ENCODE measurements at regions of chr18 and their contacts with region 1.

Region 1: GRCh38 chr18:55343396-55344073 is 244.5 kb downstream of the TCF4 start:
- DNase-seq: no peak
- ATAC-seq: peak; percentile 61 to 64
- H3K4me3 ChIP-seq: no peak overlapping the region
- H3K27ac ChIP-seq: no peak overlapping the region
- H3K4me1 ChIP-seq: peaks cover 4% of the 10 kb centered on the region
- H3K27me3 ChIP-seq: no peaks in the 10 kb centered on the region

Region 2: DNA sequence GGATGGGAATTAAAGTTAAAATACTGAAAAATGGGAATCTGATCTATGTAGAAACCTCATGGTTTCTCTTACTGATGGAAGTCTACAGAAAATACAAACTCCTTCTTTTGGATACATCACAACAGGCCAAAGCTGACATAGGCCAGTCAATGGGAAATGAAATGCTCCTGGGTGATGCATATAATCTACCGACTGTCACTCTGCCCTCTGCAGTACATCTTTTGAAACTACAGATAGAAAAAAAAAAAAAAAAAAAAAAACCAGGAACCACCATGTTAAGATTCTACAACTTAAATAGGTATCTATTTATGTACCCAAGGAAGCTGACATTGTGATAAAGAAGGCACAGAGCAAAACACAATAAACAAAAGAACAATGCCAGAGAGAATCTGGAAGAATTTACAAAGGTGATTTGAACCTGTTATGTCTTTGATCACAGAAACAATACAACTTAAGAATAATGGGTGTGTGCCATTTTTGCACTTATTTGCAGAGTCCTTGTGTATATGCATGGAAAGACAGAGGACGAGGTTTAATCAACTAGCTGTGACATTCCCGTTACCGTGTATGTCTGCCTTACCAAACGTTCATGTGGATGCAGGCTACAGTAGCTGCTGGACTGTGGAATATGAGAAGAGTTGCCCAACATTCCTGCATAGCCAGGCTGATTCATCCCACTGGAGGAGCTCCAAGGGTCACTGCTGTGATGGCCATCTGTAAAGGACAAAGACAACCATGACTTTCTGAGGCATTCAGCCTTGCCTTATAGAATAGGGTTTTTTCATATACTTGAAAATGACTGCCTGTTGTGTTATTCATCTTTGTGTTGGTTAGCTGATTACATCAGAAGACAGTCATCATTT is 68.3 kb before region 1 on chr18:
- intact Hi-C with region 1: no loop called
- DNase-seq: peak in 2 of 3 donors; percentile 42 to 48
- ATAC-seq: peak; percentile 33 to 62
- H3K4me3 ChIP-seq: no peak overlapping the region
- H3K27ac ChIP-seq: no peak overlapping the region
- H3K4me1 ChIP-seq: no peaks in the 10 kb centered on the region
- H3K27me3 ChIP-seq: no peaks in the 10 kb centered on the region

Region 3: DNA sequence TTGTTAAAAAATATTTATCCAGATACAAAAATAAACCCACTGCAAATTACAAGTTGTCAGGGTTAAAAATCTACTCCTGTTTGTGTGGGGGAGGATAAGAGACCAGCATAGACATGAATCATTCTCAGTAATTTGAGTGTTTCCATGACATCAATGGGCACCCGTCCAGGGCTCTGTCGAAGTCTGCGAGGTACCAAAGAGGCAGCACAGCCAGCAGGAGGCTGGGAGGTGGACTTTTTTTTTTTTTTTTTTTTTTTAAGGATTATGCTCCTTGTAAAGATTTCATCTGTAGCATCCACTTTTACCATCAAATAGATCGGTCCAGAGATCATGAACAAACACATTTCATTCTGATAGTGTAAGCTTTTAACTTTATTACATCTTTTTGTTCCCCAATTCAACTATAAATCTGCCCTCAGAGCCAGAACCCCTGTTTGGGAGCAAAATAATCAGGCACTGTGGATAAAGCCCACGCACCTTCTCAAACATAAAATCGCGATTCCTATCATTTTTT is 62.4 kb after region 1 on chr18:
- intact Hi-C with region 1: loop called in 1 of 4 experiments (anchors 10 kb)
- DNase-seq: peak; percentile 92 to 96 (median 93)
- ATAC-seq: peak; percentile 91 to 95
- H3K4me3 ChIP-seq: peak overlapping the region; percentile 16
- H3K27ac ChIP-seq: no peak overlapping the region
- H3K4me1 ChIP-seq: no peaks in the 10 kb centered on the region
- H3K27me3 ChIP-seq: no peaks in the 10 kb centered on the region

Region 4: GRCh38 chr18:55589625-55590291 is 246.2 kb after region 1 on chr18:
- intact Hi-C with region 1: loop called in 1 of 4 experiments (anchors 10 kb)
- DNase-seq: peak; percentile 98 to 99 (median 99)
- ATAC-seq: peak; percentile 97 to 98
- H3K4me3 ChIP-seq: peak overlapping the region; percentile 100
- H3K27ac ChIP-seq: peak overlapping the region; percentile 71
- H3K4me1 ChIP-seq: peaks cover 2% of the 10 kb centered on the region
- H3K27me3 ChIP-seq: no peaks in the 10 kb centered on the region